ENCODE measurements at regions of chr20 and their contacts with region 1.

Region 1: GRCh38 chr20:22684072-22684762 is 99.8 kb upstream of the FOXA2 start:
- H3K4me3 ChIP-seq: no peak overlapping the region
- H3K27ac ChIP-seq: no peak overlapping the region
- H3K4me1 ChIP-seq: no peaks in the 10 kb centered on the region
- CTCF ChIP-seq: peak; percentile 79; the same call in 1 of the 2 replicates

Region 2: DNA sequence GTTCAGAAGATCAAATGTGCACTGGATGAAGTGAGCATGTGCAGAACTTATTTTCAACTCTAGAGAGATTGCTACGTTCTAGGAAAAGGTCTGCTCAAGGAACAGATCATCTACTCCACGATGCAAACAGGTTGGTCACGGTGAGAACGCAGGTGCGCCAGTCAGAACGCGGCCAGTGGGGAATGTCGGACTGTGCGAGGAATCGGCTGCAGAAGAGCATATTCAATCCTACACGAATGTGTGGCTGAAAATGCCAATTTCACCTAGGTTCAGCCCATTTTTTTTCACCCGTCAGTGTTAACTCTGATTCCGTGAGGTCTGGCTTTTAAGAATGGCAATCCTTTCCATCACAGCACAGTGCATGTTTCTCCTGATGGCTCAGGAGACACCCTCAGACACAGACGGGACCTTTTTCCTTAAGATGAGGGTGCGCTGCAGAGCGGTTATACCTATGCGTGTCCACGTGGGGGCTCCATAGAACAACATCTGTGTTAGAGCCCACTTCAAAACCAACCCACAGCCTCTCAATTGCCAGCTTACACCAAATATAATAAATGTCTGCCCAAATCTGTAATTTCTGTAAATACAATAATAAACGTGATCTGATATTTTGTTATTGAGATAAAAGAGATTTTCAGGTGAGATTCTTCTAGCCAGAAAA is 350.2 kb before region 1 on chr20:
- CTCF ChIA-PET with region 1: interaction called, 86 read pairs
- POLR2A ChIA-PET with region 1: no interaction called
- H3K4me3 ChIP-seq: no peak overlapping the region
- H3K27ac ChIP-seq: no peak overlapping the region
- H3K4me1 ChIP-seq: no peaks in the 10 kb centered on the region
- CTCF ChIP-seq: 0 out of 2 replicates have a peak, but pooled peaks have one; percentile 26

Region 3: GRCh38 chr20:22339091-22339881 is 344.9 kb before region 1 on chr20:
- CTCF ChIA-PET with region 1: interaction called, 86 read pairs
- POLR2A ChIA-PET with region 1: no interaction called
- H3K4me3 ChIP-seq: no peak overlapping the region
- H3K27ac ChIP-seq: no peak overlapping the region
- H3K4me1 ChIP-seq: no peaks in the 10 kb centered on the region
- CTCF ChIP-seq: 0 out of 2 replicates have a peak, but pooled peaks have one; percentile 56

Measured in HEK293 (cell line).